Aorta (tissue), 5 donors: ENCODE measurements at regions of chr4 and their contacts with region 1.

Region 1: DNA sequence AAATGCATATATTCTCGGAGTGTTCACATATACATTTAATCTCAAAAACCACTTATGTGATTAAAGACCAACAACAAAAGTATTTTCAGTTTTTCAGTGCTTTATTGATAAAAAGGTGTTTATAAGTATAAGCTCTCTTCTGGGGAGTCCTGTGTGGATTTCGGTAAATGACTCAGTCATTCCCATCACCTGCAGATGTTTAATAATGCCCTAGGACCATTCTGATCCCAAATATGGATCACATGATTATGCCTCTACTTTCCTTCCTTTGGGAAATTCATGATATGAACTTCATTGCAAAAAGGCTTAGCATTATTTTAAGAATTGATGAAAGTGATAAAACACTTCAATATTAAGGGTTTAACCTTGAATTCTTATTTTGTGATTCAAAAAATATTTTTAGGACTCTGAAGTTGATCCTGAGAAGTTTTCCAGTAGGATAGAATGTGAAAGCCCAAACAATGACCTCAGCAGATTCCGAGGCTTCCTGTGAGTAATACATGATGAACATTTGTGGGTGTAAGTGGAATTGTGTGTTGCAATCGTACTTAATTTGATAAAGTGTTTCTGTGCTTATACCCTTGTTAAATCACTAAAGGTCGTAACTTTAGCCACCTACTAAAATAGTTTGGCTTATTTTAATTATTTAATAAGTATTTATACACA is 40.2 kb downstream of the ATP10D start:
- DNase-seq: no peak
- ATAC-seq: peak; percentile 88
- H3K4me3 ChIP-seq: no peak overlapping the region
- H3K27ac ChIP-seq: peak overlapping the region in 1 of 2 donors; percentile 93
- H3K4me1 ChIP-seq: no peaks in the 10 kb centered on the region
- H3K27me3 ChIP-seq: no peaks in the 10 kb centered on the region

Region 2: GRCh38 chr4:47485047-47485692 is 40.1 kb before region 1 on chr4 and contains the start of gene ATP10D:
- intact Hi-C with region 1: loop called in 1 of 2 experiments (anchors 5 kb)
- DNase-seq: peak; percentile 98 to 99
- ATAC-seq: peak; percentile 100
- H3K4me3 ChIP-seq: peak within 1 kb of the TSS; percentile 99 to 100
- H3K27ac ChIP-seq: peak within 1 kb of the TSS; percentile 82 to 93
- H3K4me1 ChIP-seq: peaks cover 0 to 3% of the 10 kb centered on the region in 2 donors
- H3K27me3 ChIP-seq: no peaks in the 10 kb centered on the region
- total RNA-seq, gene ATP10D: 55.6 to 57.4 TPM

Region 3: GRCh38 chr4:48016141-48017103 is 491.1 kb after region 1 on chr4 and contains the starts of genes CNGA1 and NIPAL1:
- intact Hi-C with region 1: no loop called
- DNase-seq: peak; percentile 79 to 90
- ATAC-seq: peak; percentile 92
- H3K4me3 ChIP-seq: peak within 1 kb of the TSS; percentile 51
- H3K27ac ChIP-seq: no peak within 1 kb of the TSS
- H3K4me1 ChIP-seq: no peaks in the 10 kb centered on the region
- H3K27me3 ChIP-seq: no peaks in the 10 kb centered on the region
- total RNA-seq, gene CNGA1: 1.6 to 5.5 TPM
- total RNA-seq, gene NIPAL1: 0.81 to 1.1 TPM